Posterior cingulate gyrus (tissue), 11 donors: ENCODE measurements at regions of chr1 and their contacts with region 1.

Region 1: DNA sequence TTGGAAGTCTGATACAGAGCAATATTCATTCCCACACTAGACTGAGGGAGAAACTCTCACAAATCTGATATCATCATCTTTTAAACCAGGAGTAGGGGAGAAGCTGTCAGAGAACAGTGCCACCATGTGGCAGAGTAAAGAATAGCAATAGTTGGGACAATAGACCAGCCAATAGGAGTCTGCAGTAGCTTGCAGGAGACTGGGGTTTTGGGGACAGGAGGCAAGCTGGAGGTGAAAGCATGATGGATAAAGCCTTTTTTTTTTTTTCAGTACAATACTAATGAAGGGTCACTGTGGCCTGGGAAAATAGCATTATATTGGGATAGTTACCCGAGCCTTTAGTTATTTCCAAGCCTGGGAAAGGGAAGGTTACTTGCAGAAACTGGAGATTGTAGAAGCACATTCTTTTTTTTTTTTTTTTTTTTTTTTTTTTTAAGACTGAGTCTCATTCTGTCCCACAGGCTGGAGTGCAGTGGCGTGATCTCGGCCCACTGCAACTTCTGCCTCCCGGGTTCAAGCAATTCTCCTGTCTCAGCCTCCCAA is 120.7 kb downstream of the S1PR1 start:
- DNase-seq: peak in 4 of 10 donors; percentile 44 to 67 (median 54)

Region 2: GRCh38 chr1:100657876-100658715 is 699.4 kb before region 1 on chr1:
- intact Hi-C with region 1: no loop called
- DNase-seq: no peak

Region 3: DNA sequence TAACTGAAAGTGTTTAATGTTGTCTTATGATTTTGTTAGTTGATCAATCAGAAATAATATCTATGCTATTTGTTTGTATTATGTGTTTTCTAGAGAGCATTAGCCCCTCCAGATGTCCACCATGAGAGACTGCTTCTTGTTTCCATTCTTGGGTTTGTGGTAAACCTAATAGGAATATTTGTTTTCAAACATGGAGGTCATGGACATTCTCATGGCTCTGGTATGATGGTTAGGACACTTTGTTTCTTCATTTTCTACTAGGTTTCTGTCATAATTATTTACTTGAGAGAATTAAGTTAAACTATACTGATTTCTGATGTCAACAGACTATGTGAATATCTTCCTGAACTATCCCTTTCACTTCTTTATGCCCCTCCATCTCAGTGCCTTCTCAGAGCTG is 445.5 kb before region 1 on chr1:
- intact Hi-C with region 1: loop called (anchors 10 kb)
- DNase-seq: no peak

Region 4: DNA sequence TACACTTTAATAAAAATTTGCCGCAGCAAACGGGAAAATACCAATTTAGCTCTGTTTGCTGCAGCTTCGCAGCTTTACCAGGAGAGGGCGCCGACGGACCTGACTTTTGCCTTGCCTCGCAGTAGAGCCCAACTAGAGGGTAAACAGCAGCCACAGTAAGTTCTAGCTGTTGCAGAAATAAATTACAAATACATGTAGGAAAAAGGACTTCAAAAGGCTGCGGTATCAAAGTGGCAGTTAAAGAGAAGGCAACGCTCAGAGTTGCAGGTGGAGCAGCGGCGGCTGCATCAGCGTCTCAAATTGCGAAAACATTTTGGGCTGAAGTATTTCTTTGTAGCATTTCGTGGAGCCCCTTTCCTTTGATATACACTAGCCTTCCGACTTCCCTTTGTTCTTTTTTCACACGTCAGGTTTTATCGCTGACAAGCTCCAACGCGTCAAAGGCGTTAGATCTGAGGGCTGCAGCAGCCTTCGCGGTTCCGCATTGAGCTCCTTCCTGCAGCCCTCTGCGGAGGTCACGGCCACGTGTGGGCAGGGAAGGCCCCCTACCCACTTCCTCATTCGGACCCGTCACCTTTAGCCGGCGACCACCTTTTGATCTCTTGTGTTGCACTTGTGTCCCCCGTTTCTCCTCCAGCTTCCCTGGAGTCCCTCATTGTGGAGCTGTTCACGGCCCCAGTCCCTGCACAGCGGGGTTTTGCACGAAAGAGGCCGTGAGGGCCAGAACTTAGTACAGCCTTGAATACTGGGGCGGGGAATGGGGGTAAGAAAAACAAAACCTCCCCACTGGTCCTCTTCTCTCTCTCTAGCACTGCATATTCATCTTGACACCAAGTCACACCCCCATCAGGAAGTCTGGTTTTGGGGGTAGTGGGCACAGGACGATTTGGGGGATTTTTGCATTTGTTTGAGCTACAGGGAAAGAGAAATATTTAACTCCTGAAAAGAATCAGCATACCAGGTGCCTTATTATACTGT is 47.9 kb before region 1 on chr1:
- intact Hi-C with region 1: loop called (anchors 1 kb)
- DNase-seq: peak in 8 of 10 donors; percentile 27 to 92 (median 55)